ENCODE measurements at regions of chr1 and their contacts with region 1.

Region 1: DNA sequence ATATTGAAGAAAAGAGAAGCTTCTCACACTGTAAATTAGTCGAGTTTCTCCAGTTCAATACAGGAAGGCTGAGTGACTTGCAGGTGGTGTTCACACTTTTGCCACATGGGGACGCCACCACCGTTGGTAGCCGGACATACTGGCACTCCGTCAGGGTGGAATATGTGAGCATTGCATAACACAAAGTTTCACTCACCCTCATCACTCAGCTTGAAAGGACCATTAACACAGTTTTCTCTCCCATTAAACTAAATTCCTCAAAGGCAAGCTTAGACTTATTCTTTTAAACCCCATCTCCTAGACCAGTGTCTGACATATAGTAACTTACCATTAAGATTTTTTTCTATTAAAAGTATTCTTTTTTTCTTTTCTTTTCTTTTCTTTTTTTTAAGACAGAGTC is 105.3 kb upstream of the SERBP1 start:
- DNase-seq: peak; percentile 64 to 80 (median 72)
- ATAC-seq: peak; percentile 63 to 89 (median 87)
- H3K4me3 ChIP-seq: no peak overlapping the region
- H3K27ac ChIP-seq: no peak overlapping the region
- H3K4me1 ChIP-seq: peaks cover 0 to 22% (median 5%) of the 10 kb centered on the region in 12 donors
- H3K27me3 ChIP-seq: no peaks in the 10 kb centered on the region
- CTCF ChIP-seq: peak; percentile 69 to 93 (median 88)
- POLR2A ChIP-seq: no peak

Region 2: DNA sequence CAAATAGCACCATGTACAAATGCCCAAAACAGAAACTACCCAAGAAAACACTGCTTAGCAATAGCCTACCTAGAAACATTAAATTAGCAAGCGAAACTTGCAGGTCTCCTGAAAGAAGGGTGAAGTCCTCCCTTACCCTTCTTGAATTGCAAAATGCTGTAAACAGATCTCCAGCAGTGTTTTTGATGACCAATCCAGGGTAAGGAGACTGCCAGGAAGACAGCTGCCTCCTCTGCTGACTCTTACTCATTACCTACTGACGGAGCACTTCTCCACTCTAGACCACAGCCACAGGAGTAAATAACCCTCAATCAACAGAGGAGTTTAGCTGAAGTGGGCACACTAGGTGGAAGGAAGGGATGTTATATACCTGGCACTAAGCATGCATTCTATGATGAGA is 117.3 kb after region 1 on chr1:
- intact Hi-C with region 1: no loop called
- DNase-seq: no peak
- ATAC-seq: peak in 2 of 4 donors; percentile 13 to 56
- H3K4me3 ChIP-seq: no peak overlapping the region
- H3K27ac ChIP-seq: no peak overlapping the region
- H3K4me1 ChIP-seq: peaks cover 0 to 2% (median 0%) of the 10 kb centered on the region in 12 donors
- H3K27me3 ChIP-seq: no peaks in the 10 kb centered on the region
- CTCF ChIP-seq: no peak
- POLR2A ChIP-seq: no peak

Region 3: GRCh38 chr1:67760030-67760821 is 224.8 kb after region 1 on chr1:
- intact Hi-C with region 1: loop called (anchors 1 to 5 kb)
- DNase-seq: peak in 4 of 5 donors; percentile 38 to 61 (median 45)
- ATAC-seq: peak; percentile 59 to 77 (median 68)
- H3K4me3 ChIP-seq: no peak overlapping the region
- H3K27ac ChIP-seq: peak overlapping the region in 7 of 12 donors; percentile 5 to 34 (median 21)
- H3K4me1 ChIP-seq: peaks cover 0 to 32% (median 16%) of the 10 kb centered on the region in 12 donors
- H3K27me3 ChIP-seq: no peaks in the 10 kb centered on the region
- CTCF ChIP-seq: peak; percentile 83 to 95 (median 90)
- POLR2A ChIP-seq: no peak

Region 4: GRCh38 chr1:67832737-67833601 is 297.5 kb after region 1 on chr1 and contains the start of gene GNG12:
- intact Hi-C with region 1: loop called in 5 of 10 experiments (anchors 5 to 10 kb)
- DNase-seq: peak; percentile 71 to 85 (median 76)
- ATAC-seq: peak; percentile 53 to 93 (median 80)
- H3K4me3 ChIP-seq: peak within 1 kb of the TSS; percentile 66 to 93 (median 86)
- H3K27ac ChIP-seq: peak within 1 kb of the TSS; percentile 37 to 86 (median 82)
- H3K4me1 ChIP-seq: peaks cover 0 to 26% (median 5%) of the 10 kb centered on the region in 12 donors
- H3K27me3 ChIP-seq: peaks cover 0 to 44% (median 0%) of the 10 kb centered on the region in 9 donors
- CTCF ChIP-seq: no peak
- POLR2A ChIP-seq: peak in 1 of 2 donors; percentile 25
- total RNA-seq, gene GNG12: 27.2 to 80.2 (median 44.6) TPM

Region 5: DNA sequence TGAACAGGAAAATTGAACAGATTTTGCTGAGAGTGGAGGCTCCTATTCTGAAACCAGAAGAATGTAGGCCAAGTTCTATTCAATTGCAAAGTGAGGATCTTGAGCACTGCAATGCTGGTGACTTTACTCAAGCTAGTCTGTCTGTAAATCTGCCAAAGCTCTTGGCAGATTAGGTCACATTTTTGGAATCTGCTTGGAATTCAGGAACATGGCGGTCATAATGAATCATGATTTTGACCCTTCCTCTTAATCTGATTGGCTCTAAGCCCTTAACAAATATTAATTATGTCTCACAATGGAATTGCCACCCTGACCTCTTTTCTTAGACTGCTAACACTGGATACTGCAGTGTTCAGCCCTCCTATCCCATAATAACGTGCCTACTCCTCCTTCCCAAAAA is 305.0 kb after region 1 on chr1:
- intact Hi-C with region 1: loop called in 5 of 10 experiments (anchors 10 kb)
- DNase-seq: no peak
- ATAC-seq: peak in 3 of 4 donors; percentile 45 to 77 (median 55)
- H3K4me3 ChIP-seq: no peak overlapping the region
- H3K27ac ChIP-seq: no peak overlapping the region
- H3K4me1 ChIP-seq: peaks cover 0 to 20% (median 10%) of the 10 kb centered on the region in 12 donors
- H3K27me3 ChIP-seq: peaks cover 0 to 6% (median 0%) of the 10 kb centered on the region in 9 donors
- CTCF ChIP-seq: no peak
- POLR2A ChIP-seq: no peak

Region 6: DNA sequence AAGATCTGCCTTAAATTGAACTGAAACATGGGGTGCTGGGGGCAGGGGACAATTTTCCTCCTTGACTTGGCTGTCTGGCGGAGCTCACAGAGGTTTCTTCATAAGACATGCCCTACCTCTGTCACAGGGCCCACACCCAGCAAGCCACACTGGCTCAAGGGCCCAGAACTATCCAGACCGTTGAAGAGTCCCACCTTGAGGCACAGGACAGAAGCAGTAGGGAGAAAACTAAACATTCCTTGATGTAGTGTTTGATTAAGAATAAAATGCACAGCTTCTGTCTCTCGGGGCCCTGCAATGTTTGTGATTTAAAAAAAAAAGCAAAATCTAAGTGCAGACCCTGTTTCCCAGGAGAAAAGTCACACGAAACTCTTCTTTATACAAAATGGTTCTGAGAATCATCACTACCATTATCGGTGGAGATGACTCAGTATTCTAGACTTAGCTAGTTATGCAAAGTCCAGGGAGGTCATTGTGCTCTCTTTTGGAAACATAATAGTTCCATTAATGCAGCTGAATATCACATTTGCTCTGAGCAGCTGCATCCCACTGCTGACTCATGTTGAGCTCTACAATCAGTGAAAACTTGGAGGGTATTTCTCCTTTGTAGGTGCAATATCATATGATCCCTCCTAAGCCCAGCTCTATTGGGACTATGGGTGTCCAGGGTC is 568.5 kb after region 1 on chr1:
- intact Hi-C with region 1: loop called in 2 of 10 experiments (anchors 10 kb)
- DNase-seq: no peak
- ATAC-seq: no peak
- H3K4me3 ChIP-seq: no peak overlapping the region
- H3K27ac ChIP-seq: no peak overlapping the region
- H3K4me1 ChIP-seq: no peaks in the 10 kb centered on the region
- H3K27me3 ChIP-seq: no peaks in the 10 kb centered on the region
- CTCF ChIP-seq: no peak
- POLR2A ChIP-seq: no peak

Region 7: GRCh38 chr1:68321084-68321685 is 785.7 kb after region 1 on chr1:
- intact Hi-C with region 1: loop called in 1 of 10 experiments (anchors 10 kb)
- DNase-seq: peak; percentile 62 to 78 (median 67)
- ATAC-seq: peak; percentile 80 to 97 (median 92)
- H3K4me3 ChIP-seq: no peak overlapping the region
- H3K27ac ChIP-seq: peak overlapping the region in 1 of 12 donors; percentile 26
- H3K4me1 ChIP-seq: no peaks in the 10 kb centered on the region
- H3K27me3 ChIP-seq: no peaks in the 10 kb centered on the region
- CTCF ChIP-seq: peak; percentile 41 to 81 (median 74)
- POLR2A ChIP-seq: no peak

Measured in heart left ventricle (tissue), 16 donors.